B cell (primary cell): ENCODE measurements at regions of chr7 and their contacts with region 1.

Region 1: GRCh38 chr7:50304158-50304910 is at the start of gene IKZF1:
- DNase-seq: peak; percentile 89
- ATAC-seq: peak; percentile 50
- H3K4me3 ChIP-seq: peak within 1 kb of the TSS; percentile 74 to 99 (median 87)
- H3K4me3 Mint-ChIP-seq: peak within 1 kb of the TSS; percentile 91
- H3K27ac ChIP-seq: peak within 1 kb of the TSS; percentile 71 to 83
- H3K27ac Mint-ChIP-seq: peak within 1 kb of the TSS; percentile 94
- H3K4me1 ChIP-seq: peaks cover 18 to 32% of the 10 kb centered on the region in 2 donors
- H3K4me1 Mint-ChIP-seq: peaks cover 36% of the 10 kb centered on the region
- H3K27me3 ChIP-seq: no peaks in the 10 kb centered on the region
- H3K27me3 Mint-ChIP-seq: no peaks in the 10 kb centered on the region
- CTCF ChIP-seq: peak; percentile 11
- total RNA-seq, gene IKZF1: 254 and 261 TPM in 2 replicates

Region 2: DNA sequence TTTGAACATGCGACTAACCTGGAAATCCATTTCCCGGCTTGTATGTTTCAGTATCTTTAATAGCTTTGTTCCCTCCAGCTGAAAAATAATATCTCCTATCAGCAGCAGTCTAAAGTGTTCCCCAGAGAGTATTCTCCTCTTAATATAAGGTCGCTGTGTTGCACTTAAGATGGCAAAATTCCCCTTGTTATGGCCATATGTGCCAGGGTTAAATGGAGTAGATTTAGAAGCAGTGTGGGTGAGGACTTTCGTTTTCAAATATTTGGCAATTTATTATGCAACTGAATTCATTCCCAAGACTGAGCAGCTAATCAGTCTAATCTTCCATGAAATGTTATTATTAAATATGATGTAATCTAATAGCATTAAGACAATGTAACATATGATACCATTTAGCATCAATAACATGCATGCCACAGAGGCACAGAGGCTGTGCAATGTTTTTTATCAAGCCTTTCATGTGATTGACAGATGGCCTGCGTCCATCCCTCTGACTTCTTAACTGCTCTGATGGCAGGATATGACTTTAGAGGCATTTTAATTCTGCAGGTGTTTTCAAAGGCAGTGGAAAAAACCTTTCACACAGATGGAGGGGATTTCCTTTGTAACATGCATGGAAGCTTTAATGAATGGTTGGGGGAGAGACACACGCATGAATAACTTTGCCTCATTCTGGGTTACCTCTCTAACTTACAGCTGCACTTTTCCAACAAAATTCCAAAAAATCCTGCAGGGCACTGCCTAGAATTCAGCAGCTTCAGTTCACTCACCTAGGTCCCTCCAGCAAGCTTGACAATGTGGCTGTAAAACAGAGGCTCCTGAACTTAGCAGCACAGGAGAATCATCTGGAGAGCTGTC is 156.2 kb before region 1 on chr7:
- CTCF ChIA-PET with region 1: interaction called, 3 read pairs
- POLR2A ChIA-PET with region 1: interaction called, 3 read pairs
- intact Hi-C with region 1: loop called (anchors 5 kb)
- DNase-seq: peak; percentile 82
- ATAC-seq: peak; percentile 74
- H3K4me3 ChIP-seq: no peak overlapping the region
- H3K4me3 Mint-ChIP-seq: peak overlapping the region; percentile 77
- H3K27ac ChIP-seq: peak overlapping the region; percentile 77 to 89
- H3K27ac Mint-ChIP-seq: peak overlapping the region; percentile 91
- H3K4me1 ChIP-seq: peaks cover 74 to 87% of the 10 kb centered on the region in 2 donors
- H3K4me1 Mint-ChIP-seq: peaks cover 87% of the 10 kb centered on the region
- H3K27me3 ChIP-seq: no peaks in the 10 kb centered on the region
- H3K27me3 Mint-ChIP-seq: no peaks in the 10 kb centered on the region
- CTCF ChIP-seq: no peak

Region 3: DNA sequence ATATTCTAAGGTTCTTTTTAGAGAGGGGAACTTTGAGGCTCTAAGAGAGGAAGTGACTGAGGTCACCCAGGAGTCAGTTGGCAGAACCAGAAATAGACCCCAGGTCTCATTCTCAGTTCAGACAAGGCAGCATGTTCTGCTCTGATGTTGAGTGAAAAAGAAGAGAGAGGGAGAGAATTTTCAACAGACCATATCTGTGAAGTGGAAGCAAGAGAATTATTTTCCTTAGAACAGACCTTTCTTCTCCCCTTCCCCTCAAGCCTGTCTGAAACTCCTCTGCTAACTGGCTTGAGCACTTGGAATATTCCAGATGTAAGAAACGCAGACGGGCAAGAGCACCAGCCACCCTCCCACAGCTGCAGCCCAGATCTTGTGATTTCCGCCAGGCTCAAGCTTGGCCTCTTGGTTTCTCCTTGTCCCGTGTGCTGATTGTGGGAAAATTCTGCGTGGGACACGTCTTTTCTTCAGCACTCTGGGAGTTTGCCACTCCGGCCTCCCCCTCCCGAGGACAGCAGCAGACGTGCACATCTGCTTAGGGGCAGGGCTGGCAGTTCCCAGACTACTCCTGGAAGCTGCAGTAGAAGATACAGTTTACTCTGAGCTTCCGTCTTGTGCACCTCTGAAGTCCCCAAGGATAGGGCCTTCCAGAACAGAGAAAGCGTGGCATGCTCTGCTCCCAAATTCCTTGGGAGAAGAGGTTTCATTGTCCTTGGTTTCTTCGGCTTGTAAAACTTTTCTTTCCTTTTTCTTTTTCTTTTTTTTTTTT is 22.5 kb before region 1 on chr7:
- CTCF ChIA-PET with region 1: interaction called, 15 read pairs
- POLR2A ChIA-PET with region 1: interaction called, 7 read pairs
- intact Hi-C with region 1: loop called (anchors 2 kb)
- DNase-seq: peak; percentile 80
- ATAC-seq: peak; percentile 91
- H3K4me3 ChIP-seq: peak overlapping the region in 4 of 5 experiments; percentile 39 to 57 (median 46)
- H3K4me3 Mint-ChIP-seq: peak overlapping the region; percentile 86
- H3K27ac ChIP-seq: peak overlapping the region; percentile 95 to 96
- H3K27ac Mint-ChIP-seq: peak overlapping the region; percentile 94
- H3K4me1 ChIP-seq: peaks cover 60 to 65% of the 10 kb centered on the region in 2 donors
- H3K4me1 Mint-ChIP-seq: peaks cover 79% of the 10 kb centered on the region
- H3K27me3 ChIP-seq: no peaks in the 10 kb centered on the region
- H3K27me3 Mint-ChIP-seq: no peaks in the 10 kb centered on the region
- CTCF ChIP-seq: no peak

Region 4: DNA sequence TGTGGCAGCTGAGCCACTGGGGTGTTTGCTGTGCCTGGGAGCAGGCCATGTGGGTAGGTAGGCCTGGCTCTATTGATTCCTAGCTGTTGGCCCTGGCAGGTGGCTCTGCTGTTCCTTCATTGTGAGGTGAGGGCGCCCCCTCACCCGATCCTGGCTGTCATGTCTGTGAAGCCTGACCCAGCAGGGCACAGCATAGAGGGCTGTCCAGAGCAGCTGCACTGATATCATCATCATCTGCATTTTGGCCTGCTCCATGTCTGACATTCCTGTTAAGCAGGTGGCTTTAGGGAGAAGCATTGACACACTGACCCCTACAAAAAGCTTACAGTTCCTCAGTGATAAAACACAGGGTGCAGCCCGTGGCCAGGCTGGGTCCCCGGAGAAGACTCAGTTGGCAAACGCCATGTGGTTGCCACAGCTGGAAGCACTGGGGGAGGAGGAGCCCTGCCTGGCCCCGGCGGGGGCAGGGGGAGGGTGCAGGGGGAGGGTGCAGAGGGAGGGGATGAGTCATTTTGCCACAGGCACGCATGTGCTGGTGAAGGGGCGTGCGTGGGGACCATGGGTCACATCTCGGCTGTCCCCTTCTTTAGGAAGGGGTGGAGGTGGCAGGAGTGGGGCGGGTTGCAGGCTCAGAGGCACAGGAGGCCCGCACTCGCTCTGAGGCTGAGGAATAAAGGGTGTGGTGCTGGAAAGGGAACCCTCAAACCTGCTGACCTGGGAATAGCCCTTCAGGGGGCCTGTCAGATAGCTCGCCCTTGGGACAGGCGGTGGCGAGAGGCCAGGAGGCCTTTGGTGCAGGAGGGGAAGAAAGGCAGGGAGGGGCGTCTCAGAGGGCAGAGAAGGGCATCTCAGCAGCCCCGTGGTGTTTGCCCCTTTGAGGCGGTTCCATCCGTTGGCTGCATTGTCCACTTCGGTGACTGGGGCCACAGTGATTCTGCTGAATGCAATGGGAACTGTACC is 31.7 kb after region 1 on chr7:
- CTCF ChIA-PET with region 1: interaction called, 17 read pairs
- POLR2A ChIA-PET with region 1: interaction called, 12 read pairs
- intact Hi-C with region 1: loop called (anchors 1 kb)
- DNase-seq: peak; percentile 58
- ATAC-seq: peak; percentile 63
- H3K4me3 ChIP-seq: no peak overlapping the region
- H3K4me3 Mint-ChIP-seq: no peak overlapping the region
- H3K27ac ChIP-seq: peak overlapping the region; percentile 72 to 95
- H3K27ac Mint-ChIP-seq: no peak overlapping the region
- H3K4me1 ChIP-seq: peaks cover 100% of the 10 kb centered on the region in 2 donors
- H3K4me1 Mint-ChIP-seq: peaks cover 14% of the 10 kb centered on the region
- H3K27me3 ChIP-seq: no peaks in the 10 kb centered on the region
- H3K27me3 Mint-ChIP-seq: no peaks in the 10 kb centered on the region
- CTCF ChIP-seq: no peak

Region 5: DNA sequence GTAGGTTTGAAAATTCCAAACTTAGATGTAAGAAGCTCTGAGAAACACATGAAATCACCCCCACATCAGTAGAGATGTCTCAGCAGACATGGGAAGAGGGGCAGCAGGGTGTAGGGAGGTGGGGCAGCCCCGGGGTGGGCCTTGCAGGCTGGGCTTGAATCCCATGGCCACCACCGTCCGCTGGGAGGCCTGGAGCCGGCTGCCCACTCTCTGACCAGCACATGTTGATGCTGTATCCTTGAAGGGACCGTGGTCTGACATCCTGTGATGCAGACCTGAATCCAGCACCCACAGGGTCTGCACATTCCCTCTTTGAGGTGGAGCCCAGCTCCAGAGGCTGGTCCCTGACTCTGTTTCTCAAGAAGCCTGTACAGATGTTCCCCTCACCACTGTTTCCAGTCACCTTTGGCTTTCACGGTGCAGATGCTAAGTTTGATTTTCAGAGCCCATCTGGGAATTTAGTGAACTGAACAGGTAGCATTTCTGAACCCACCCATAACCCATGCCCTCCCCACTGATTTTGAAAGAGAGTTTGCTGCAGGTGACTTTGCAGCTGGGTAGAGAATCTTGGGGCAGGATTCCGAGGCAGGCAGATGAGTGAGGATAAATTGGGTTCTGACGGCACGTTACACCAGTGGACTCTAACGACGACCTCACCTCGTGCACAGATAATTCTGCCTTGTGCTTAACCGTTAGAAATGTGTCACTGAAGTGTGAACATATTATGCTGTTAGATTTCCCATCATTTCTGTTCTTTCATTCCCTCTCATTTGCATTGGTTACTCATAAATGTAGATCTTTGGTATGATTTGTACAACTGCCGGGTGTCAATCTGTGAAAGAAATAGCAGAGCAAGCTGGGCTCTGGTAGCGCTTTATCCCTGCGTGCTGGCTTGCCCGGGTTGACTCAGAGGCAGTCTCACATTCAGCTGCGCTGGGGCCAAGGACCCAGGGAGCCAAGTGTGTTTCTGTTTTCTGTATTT is 45.9 kb after region 1 on chr7:
- CTCF ChIA-PET with region 1: interaction called, 30 read pairs
- POLR2A ChIA-PET with region 1: no interaction called
- intact Hi-C with region 1: no loop called
- DNase-seq: peak; percentile 40
- ATAC-seq: peak; percentile 42
- H3K4me3 ChIP-seq: peak overlapping the region in 2 of 5 experiments; percentile 3 to 17
- H3K4me3 Mint-ChIP-seq: peak overlapping the region; percentile 73
- H3K27ac ChIP-seq: peak overlapping the region; percentile 31 to 90
- H3K27ac Mint-ChIP-seq: peak overlapping the region; percentile 88
- H3K4me1 ChIP-seq: peaks cover 49 to 86% of the 10 kb centered on the region in 2 donors
- H3K4me1 Mint-ChIP-seq: peaks cover 90% of the 10 kb centered on the region
- H3K27me3 ChIP-seq: no peaks in the 10 kb centered on the region
- H3K27me3 Mint-ChIP-seq: no peaks in the 10 kb centered on the region
- CTCF ChIP-seq: no peak